Naive thymus-derived CD8-positive, alpha-beta T cell (primary cell): ENCODE measurements at regions of chr2 and their contacts with region 1.

Region 1: DNA sequence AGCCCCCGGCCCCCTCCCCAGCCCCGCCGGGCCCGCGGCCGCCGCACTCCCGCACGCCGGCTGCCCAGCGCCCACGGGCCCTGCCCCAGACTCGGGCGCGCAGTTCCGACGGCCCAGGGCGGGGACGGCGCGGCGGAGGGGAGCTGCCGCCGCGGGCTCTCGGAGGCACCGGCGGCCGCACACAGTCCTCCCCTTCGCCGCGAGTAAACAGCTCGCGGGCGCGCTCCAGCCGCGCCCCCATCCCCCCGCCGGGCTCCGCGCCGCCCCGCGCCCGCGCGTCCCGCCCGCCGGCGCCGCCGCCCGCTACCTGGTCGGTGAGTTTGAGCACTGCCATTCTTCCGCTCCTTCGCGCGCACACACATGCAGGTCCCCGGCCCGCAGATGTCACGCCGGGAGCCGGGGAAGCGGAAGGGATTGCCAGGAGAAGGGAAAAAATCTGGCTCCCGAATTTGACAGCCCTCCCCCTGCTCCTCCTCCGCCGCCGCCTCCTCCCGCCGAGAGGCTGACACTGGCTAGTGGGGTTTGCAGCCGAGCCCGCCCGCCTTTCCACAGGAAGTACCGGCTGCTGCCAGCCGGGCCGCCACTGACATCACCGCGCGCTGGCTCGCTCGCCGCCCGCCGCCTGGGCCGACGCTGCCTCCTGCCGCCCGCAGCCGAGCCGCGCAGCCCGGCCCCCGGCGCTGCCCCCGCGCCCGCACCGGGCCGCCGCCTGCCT is at the start of gene ANKRD44:
- DNase-seq: peak; percentile 83 to 95 (median 88)
- ATAC-seq: peak; percentile 75 to 80
- H3K4me3 Mint-ChIP-seq: peak within 1 kb of the TSS; percentile 92 to 99 (median 96)
- H3K27ac Mint-ChIP-seq: peak within 1 kb of the TSS; percentile 93 to 98 (median 96)
- H3K4me1 Mint-ChIP-seq: peaks cover 34 to 67% (median 61%) of the 10 kb centered on the region in 4 donors
- H3K27me3 Mint-ChIP-seq: no peaks in the 10 kb centered on the region
- polyA plus RNA-seq, gene ANKRD44: 85.8 to 96.1 (median 94.2) TPM

Region 2: GRCh38 chr2:197191177-197191939 is 119.1 kb before region 1 on chr2:
- POLR2A ChIA-PET with region 1: interaction called, 582 read pairs
- DNase-seq: peak in 4 of 10 donors; percentile 46 to 76 (median 73)
- ATAC-seq: peak; percentile 41 to 60
- H3K4me3 Mint-ChIP-seq: peak overlapping the region; percentile 11 to 79 (median 56)
- H3K27ac Mint-ChIP-seq: peak overlapping the region; percentile 35 to 98 (median 83)
- H3K4me1 Mint-ChIP-seq: peaks cover 41 to 91% (median 83%) of the 10 kb centered on the region in 4 donors
- H3K27me3 Mint-ChIP-seq: no peaks in the 10 kb centered on the region

Region 3: DNA sequence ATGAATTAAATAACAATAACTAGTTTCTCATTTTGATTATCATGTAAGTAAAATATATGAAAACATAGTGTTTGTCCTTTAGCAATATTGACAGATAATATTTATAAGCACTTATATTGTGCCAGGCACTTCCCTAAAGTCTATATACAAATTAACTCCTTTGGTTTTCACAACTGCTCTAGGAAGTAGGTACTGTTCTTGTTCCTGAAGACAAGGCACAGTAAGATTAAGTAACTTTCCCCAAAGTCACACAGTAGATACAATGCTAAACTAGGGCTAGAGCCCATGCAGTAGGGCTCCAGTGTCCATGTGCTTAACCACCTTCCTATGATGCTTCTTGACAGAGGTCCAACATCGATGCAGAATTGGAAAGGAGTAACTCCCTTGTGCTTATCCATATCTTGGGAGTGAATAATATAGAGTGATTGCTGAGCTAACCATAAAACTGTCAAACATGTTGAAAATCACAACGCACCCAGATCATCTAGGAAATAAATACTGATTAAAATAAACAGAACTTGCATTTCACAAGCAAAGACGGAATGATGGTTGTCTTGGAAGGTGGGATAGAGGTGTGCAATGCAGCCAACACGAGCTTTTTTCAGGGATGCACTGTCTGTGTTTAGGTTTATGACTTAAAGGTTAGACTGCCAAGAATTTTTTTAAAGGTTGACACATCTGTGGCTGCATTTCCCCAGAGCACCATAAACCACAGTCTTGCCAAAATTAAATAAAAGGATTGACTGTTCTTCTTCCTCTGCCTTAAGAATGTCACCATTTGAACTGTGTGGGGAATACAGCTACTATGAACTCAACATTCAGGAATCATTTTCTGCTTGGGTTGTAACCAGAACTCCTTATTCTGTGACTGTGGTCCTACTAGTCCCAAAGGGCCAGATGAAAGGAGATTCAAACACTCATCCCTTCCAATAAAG is 80.7 kb before region 1 on chr2:
- POLR2A ChIA-PET with region 1: interaction called, 48 read pairs
- DNase-seq: no peak
- ATAC-seq: no peak
- H3K4me3 Mint-ChIP-seq: peak overlapping the region in 9 of 10 donors; percentile 6 to 73 (median 51)
- H3K27ac Mint-ChIP-seq: peak overlapping the region; percentile 51 to 100 (median 88)
- H3K4me1 Mint-ChIP-seq: peaks cover 42 to 98% (median 95%) of the 10 kb centered on the region in 4 donors
- H3K27me3 Mint-ChIP-seq: no peaks in the 10 kb centered on the region

Region 4: GRCh38 chr2:197248623-197249022 is 61.8 kb before region 1 on chr2:
- POLR2A ChIA-PET with region 1: interaction called, 11 read pairs
- DNase-seq: peak in 2 of 10 donors; percentile 28 to 43
- ATAC-seq: peak; percentile 61 to 86
- H3K4me3 Mint-ChIP-seq: peak overlapping the region; percentile 4 to 81 (median 66)
- H3K27ac Mint-ChIP-seq: peak overlapping the region; percentile 49 to 100 (median 92)
- H3K4me1 Mint-ChIP-seq: peaks cover 40 to 88% (median 80%) of the 10 kb centered on the region in 4 donors
- H3K27me3 Mint-ChIP-seq: no peaks in the 10 kb centered on the region

Region 5: GRCh38 chr2:197268786-197269584 is 41.4 kb before region 1 on chr2:
- POLR2A ChIA-PET with region 1: interaction called, 102 read pairs
- DNase-seq: peak in 2 of 10 donors; percentile 33 to 36
- ATAC-seq: peak; percentile 49 to 51
- H3K4me3 Mint-ChIP-seq: peak overlapping the region; percentile 4 to 77 (median 56)
- H3K27ac Mint-ChIP-seq: peak overlapping the region; percentile 76 to 99 (median 92)
- H3K4me1 Mint-ChIP-seq: peaks cover 41 to 98% (median 97%) of the 10 kb centered on the region in 4 donors
- H3K27me3 Mint-ChIP-seq: no peaks in the 10 kb centered on the region

Region 6: DNA sequence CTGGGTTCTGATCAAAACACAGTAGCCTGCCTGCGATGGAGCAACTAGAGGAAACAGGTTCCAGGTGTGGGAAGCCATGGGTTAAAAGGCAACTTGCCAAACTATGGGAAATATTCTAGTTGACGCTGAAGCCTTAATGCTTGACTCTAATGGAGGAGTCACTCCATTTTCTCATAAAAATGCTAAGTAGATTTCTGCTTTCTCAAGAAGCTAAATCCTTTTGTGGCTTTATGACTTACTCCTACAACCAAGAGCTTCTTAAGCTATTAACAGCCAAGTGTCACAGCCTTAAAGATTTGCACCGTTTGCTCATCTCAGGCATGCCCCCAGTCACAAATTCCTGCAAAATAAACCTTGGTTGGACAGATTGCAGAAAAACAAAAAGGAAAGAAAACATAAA is 25.1 kb before region 1 on chr2:
- POLR2A ChIA-PET with region 1: interaction called, 18 read pairs
- DNase-seq: no peak
- ATAC-seq: no peak
- H3K4me3 Mint-ChIP-seq: peak overlapping the region in 8 of 10 donors; percentile 25 to 81 (median 62)
- H3K27ac Mint-ChIP-seq: peak overlapping the region; percentile 22 to 99 (median 93)
- H3K4me1 Mint-ChIP-seq: peaks cover 41 to 95% (median 92%) of the 10 kb centered on the region in 4 donors
- H3K27me3 Mint-ChIP-seq: no peaks in the 10 kb centered on the region

Region 7: GRCh38 chr2:197322724-197323720 is 12.6 kb after region 1 on chr2:
- POLR2A ChIA-PET with region 1: interaction called, 53 read pairs
- DNase-seq: peak in 3 of 10 donors; percentile 23 to 57 (median 43)
- ATAC-seq: peak; percentile 75 to 82
- H3K4me3 Mint-ChIP-seq: peak overlapping the region; percentile 59 to 88 (median 82)
- H3K27ac Mint-ChIP-seq: peak overlapping the region; percentile 94 to 100 (median 98)
- H3K4me1 Mint-ChIP-seq: peaks cover 37 to 74% (median 68%) of the 10 kb centered on the region in 4 donors
- H3K27me3 Mint-ChIP-seq: no peaks in the 10 kb centered on the region

Region 8: DNA sequence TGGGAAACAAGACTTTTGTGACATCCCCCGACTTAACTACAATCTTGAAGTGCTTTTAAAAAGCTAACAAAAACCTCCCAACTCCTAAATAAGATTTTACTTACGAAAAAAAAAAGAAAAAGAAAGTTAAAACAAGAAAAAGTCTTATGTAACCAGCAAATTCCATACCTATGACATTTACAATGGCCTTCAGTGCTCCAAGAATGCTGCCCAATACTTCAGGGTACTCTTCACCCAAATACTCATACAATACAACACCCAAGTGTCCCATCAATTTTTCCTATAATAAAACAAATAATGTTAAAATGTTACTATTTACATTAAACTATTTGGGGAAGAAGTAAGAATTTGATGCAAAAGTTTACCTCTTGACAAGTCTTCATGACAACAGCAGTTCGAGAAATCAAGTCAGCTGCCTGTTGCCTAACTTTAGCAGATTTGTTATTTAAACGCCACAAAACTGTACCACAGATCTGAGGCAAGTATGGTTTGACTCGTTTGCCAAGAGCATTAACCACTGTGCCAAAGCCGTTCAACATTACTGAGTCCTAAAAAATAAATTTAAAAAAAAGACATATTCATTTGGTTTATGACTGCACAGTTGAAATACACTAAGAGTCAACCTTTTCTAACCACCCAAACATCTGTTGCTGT is 89.6 kb after region 1 on chr2:
- POLR2A ChIA-PET with region 1: no interaction called
- DNase-seq: no peak
- ATAC-seq: no peak
- H3K4me3 Mint-ChIP-seq: no peak overlapping the region
- H3K27ac Mint-ChIP-seq: peak overlapping the region in 1 of 10 donors; percentile 25
- H3K4me1 Mint-ChIP-seq: peaks cover 0 to 3% (median under 1%) of the 10 kb centered on the region in 4 donors
- H3K27me3 Mint-ChIP-seq: no peaks in the 10 kb centered on the region